ENCODE measurements at regions of chr17 and their contacts with region 1.

Region 1: GRCh38 chr17:75046582-75047289 is at the starts of genes ATP5PD and KCTD2:
- DNase-seq: peak; percentile 98
- ATAC-seq: peak; percentile 99
- total RNA-seq, gene ATP5PD: 863 TPM
- total RNA-seq, gene KCTD2: 26.7 TPM

Region 2: GRCh38 chr17:74619077-74619673 is 427.6 kb before region 1 on chr17:
- intact Hi-C with region 1: no loop called
- DNase-seq: no peak
- ATAC-seq: peak; percentile 75

Region 3: GRCh38 chr17:74904687-74905409 is 141.9 kb before region 1 on chr17:
- intact Hi-C with region 1: no loop called
- DNase-seq: no peak
- ATAC-seq: no peak

Region 4: DNA sequence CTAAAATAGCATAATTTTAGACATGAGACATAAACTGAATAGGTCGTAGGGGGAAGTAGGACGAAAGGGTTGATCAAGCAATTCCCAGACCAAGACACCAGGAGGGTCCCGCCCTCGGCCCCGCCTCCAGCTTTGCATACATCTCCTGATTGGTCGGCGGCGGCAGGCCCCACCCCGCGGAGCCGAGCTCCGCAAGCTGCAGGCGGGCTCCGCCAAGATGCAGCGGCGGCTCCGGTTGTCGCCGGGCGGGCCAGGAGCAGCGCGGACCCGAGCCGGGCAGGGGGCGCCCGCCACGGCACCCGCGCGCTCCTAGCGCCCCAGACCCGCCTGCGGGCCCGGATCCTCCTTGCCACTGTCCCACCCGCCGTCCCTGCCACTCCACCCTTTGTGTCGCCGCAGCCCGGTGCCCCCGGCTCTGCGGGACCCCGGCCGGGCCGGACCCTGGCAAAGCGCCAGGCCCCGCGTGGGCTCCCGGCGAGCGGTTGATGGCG is 59.3 kb before region 1 on chr17 and contains the start of gene CDR2L:
- intact Hi-C with region 1: loop called (anchors 5 kb)
- DNase-seq: peak; percentile 99
- ATAC-seq: peak; percentile 93
- total RNA-seq, gene CDR2L: 22.1 TPM

Region 5: GRCh38 chr17:75205037-75205792 is 158.5 kb after region 1 on chr17 and contains the start of gene NUP85:
- intact Hi-C with region 1: loop called (anchors 10 kb)
- DNase-seq: peak; percentile 95
- ATAC-seq: peak; percentile 97
- total RNA-seq, gene NUP85: 28.7 TPM

Region 6: DNA sequence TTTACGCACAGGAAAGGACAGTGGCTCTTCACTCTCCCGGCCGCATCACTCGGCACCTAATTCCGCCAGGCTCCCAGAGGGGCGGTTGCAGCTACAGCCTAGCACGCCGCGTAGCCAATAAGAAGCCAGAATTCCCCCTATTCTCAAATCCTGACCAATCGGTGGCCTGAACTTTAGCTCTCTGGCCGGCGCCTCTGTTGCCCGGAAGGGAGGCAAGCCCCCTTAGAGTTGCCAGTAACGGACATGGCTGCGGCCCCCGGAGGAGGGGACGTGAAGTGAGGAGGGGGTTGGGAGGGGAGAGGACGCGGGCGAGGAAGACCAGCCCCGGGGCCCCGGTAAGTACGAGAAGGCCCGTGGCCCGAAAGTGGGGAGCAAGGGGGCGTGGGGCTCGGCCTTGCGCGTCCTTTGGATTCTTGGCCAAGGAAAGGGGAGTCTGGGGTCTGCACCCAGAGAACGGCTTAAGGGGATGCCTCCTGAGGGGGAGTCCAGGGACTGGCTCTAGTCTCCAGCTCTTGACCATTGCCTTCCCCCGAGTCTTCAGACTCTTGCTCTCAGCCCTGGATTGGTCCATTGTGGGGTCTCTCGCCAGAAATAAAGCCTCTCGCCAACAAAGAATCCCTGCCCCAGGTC is 409.8 kb after region 1 on chr17 and contains the start of gene TMEM94:
- intact Hi-C with region 1: no loop called
- DNase-seq: peak; percentile 96
- ATAC-seq: peak; percentile 99
- total RNA-seq, gene TMEM94: 50.3 TPM

Region 7: GRCh38 chr17:75524953-75525719 is 478.4 kb after region 1 on chr17 and contains the start of gene LLGL2:
- intact Hi-C with region 1: no loop called
- DNase-seq: peak; percentile 92
- ATAC-seq: peak; percentile 85
- total RNA-seq, gene LLGL2: 4.1 TPM

Measured in Right ventricle myocardium inferior (tissue), 1 donor.